ENCODE measurements at regions of chr2 and their contacts with region 1.

Region 1: DNA sequence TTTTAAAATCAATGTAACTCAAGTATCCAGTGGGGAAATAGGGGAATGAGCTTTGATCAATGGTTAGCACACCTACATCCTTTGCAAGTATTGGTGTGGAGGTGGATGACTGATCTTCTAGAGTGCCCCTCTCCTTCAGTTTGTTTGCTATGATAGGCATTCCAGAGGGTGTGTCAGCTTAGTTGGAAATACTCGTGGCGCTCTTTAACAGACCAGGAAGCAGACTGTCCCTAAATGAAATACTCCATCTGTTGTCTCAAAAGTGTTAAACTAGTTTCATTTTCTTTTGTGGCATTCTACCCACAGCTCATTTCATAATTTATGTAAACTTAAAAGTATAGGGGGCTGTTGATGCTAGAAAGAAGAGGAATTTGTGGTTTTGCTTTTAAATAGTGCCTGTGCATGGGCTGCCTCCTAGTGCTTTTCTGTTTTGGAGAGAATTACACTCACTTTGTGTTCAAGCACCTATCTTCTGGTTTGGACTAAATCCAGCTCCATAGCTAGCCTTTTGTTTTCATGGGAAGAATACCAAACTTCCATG is 66.2 kb downstream of the STAT1 start:
- DNase-seq: no peak
- H3K4me3 Mint-ChIP-seq: no peak overlapping the region
- H3K27ac Mint-ChIP-seq: no peak overlapping the region
- H3K4me1 Mint-ChIP-seq: peaks cover 12% of the 10 kb centered on the region
- H3K27me3 Mint-ChIP-seq: no peaks in the 10 kb centered on the region

Region 2: GRCh38 chr2:190961918-190962487 is 14.2 kb after region 1 on chr2:
- CTCF ChIA-PET with region 1: interaction called, 5 read pairs
- POLR2A ChIA-PET with region 1: interaction called, 20 read pairs
- DNase-seq: no peak
- H3K4me3 Mint-ChIP-seq: no peak overlapping the region
- H3K27ac Mint-ChIP-seq: peak overlapping the region; percentile 10
- H3K4me1 Mint-ChIP-seq: peaks cover 20% of the 10 kb centered on the region
- H3K27me3 Mint-ChIP-seq: no peaks in the 10 kb centered on the region